Mucosa of descending colon (tissue), 3 donors: ENCODE measurements at regions of chr4 and their contacts with region 1.

Region 1: GRCh38 chr4:110310795-110311194 is 112.4 kb upstream of the ELOVL6 start:
- DNase-seq: no peak
- ATAC-seq: no peak
- H3K4me3 ChIP-seq: no peak overlapping the region
- H3K4me1 ChIP-seq: no peaks in the 10 kb centered on the region
- CTCF ChIP-seq: no peak

Region 2: DNA sequence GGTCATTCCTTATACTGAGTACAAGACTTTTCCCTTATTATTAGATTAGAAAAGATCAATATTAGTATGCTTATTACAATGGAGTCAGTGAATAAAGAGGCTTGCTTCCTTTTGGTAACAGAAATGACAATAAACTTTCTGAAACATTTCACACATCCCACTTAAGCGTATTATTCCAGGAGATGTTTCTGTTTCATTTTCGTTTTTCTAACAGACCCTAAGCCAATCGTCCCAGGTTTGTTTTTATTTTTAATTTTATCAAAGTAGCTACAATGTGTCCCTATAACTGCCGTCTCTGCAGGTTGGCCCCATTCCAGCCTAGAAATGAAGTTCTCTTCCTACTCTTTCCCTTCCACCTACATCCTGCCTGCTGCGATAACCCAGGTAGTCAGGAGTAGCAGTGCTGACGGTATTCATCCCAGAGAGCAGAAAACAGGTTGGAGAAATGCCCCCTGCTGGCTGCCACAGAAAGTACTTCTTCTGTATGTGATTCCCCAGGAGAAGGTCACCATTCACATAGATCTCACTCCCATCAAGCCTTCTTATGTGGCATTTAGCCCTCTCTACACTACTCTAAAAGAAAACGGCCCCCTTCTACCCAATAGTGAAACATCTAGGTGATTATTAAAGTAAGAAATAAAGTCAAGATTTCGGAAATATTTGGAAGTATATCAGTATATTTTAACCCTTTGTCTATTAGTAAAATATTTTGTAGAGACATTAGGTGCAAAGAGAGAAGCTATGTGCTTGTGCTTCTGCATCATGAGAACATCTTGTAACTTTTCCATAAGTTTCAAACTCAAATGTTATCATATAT is 205.5 kb after region 1 on chr4:
- intact Hi-C with region 1: loop called in 1 of 2 experiments (anchors 10 kb)
- DNase-seq: peak; percentile 58 to 90 (median 77)
- ATAC-seq: peak; percentile 100
- H3K4me3 ChIP-seq: no peak overlapping the region
- H3K4me1 ChIP-seq: peaks cover 2% of the 10 kb centered on the region
- CTCF ChIP-seq: peak; percentile 22

Region 3: DNA sequence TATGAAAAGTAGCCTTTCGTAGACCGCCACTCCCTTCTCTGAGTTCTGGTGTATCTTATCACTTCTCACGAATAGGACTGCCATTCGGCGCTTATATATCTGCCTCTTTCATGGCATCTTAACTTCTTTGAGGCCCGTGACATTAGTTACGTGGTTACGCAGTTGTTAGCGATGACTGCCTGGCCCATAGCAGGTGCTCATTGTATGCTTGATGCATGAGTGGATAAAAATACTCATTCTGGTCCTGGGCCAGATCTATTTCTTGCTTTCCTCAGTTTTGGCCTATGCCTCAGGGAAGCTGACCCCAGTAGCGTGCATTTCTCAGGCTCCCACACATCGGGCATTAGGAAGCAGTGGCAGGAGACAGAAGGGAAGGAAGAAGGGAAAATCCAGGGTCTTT is 372.8 kb after region 1 on chr4:
- intact Hi-C with region 1: no loop called
- DNase-seq: no peak
- ATAC-seq: no peak
- H3K4me3 ChIP-seq: no peak overlapping the region
- H3K4me1 ChIP-seq: no peaks in the 10 kb centered on the region
- CTCF ChIP-seq: no peak